Cardiac septum (tissue), 1 donor: ENCODE measurements at regions of chr18 and their contacts with region 1.

Region 1: GRCh38 chr18:34787931-34788532 is 77.9 kb downstream of the DTNA start:
- DNase-seq: no peak

Region 2: DNA sequence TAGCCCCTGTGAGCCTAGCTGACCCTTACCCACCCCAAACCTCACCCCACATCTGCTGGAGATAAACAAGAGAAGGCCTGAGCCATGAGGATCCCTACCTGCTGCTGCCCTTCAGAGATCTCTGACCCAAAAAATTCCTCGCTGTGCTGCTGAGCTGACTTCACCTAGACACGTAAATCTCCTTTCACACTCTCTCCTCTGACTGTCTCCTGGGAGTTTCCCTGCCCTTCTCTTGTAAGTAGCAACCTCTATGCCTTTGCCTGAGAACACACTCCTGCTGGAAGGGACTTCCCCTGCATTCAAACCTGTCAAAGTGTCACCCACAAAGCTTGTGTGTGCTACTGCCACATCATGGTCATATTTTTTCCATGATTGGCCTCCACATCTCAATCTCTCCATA is 429.1 kb before region 1 on chr18:
- intact Hi-C with region 1: loop called (anchors 5 kb)
- DNase-seq: no peak

Region 3: GRCh38 chr18:34493099-34493544 is 294.9 kb before region 1 on chr18:
- intact Hi-C with region 1: loop called (anchors 10 kb)
- DNase-seq: peak; percentile 85

Region 4: GRCh38 chr18:34661464-34662111 is 126.4 kb before region 1 on chr18:
- intact Hi-C with region 1: loop called (anchors 2 kb)
- DNase-seq: no peak